ENCODE measurements at regions of chr10 and their contacts with region 1.

Region 1: DNA sequence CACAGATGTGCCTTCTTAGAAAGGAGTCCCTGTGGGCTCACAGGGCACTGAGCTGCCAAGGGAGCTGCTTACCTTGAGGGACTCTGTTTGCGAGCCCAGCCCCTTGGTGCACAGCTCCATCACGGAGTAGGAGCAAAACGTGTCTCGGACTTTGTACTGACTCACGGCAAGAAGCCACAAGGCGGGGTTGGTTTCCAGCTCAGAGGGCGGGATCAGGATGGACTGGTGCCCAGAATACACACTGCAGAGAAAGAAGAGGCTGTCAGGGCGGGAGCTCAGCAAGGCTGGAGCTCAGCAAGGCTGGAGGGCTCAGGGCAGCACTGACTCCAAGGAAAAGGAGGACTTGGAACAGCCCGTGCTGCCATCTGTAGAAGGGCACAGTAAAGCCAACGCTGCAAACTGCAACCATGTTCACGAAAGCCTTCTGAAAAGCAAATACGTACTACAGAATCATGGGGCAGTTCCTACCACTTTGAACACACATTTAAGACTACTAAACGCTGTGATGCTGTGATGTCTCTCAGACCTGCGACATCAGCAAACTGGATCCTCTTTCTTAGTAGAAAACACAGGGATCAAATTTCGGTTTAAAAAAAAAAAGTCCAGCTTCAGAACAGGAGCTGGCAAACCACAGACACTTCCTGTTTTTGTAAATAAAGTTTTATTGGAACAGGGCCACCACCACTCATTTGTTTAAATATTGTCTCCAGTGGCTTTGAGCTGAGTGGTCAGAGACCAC is 194.3 kb downstream of the ZMYND11 start:
- DNase-seq: peak; percentile 60
- H3K4me3 Mint-ChIP-seq: peak overlapping the region; percentile 41
- H3K27ac Mint-ChIP-seq: peak overlapping the region; percentile 26
- H3K4me1 Mint-ChIP-seq: peaks cover 17% of the 10 kb centered on the region
- H3K27me3 Mint-ChIP-seq: no peaks in the 10 kb centered on the region

Region 2: DNA sequence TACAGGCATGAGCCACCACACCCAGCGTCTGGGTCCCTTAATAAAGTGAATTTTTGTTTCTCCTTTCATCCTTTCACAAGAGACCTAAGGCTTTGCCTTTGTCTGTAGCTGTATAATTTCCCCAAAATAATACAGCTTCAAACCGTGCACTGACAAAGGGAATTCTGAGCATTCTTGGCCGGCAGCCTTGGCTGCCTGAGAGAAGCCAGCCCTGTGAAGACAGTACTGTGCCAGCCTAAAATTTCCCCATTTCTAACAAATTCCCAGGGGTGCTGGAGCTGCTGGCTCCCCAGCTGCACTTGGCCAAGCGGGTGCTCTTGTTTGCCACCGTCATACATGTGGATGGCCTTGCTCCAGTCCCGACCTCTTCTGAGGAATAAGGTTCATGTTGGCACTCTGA is 88.1 kb before region 1 on chr10:
- intact Hi-C with region 1: no loop called
- DNase-seq: no peak
- H3K4me3 Mint-ChIP-seq: no peak overlapping the region
- H3K27ac Mint-ChIP-seq: no peak overlapping the region
- H3K4me1 Mint-ChIP-seq: no peaks in the 10 kb centered on the region
- H3K27me3 Mint-ChIP-seq: no peaks in the 10 kb centered on the region

Region 3: GRCh38 chr10:283916-284356 is 45.6 kb before region 1 on chr10:
- intact Hi-C with region 1: loop called (anchors 5 kb)
- DNase-seq: peak; percentile 74
- H3K4me3 Mint-ChIP-seq: peak overlapping the region; percentile 47
- H3K27ac Mint-ChIP-seq: peak overlapping the region; percentile 73
- H3K4me1 Mint-ChIP-seq: peaks cover 17% of the 10 kb centered on the region
- H3K27me3 Mint-ChIP-seq: no peaks in the 10 kb centered on the region

Region 4: DNA sequence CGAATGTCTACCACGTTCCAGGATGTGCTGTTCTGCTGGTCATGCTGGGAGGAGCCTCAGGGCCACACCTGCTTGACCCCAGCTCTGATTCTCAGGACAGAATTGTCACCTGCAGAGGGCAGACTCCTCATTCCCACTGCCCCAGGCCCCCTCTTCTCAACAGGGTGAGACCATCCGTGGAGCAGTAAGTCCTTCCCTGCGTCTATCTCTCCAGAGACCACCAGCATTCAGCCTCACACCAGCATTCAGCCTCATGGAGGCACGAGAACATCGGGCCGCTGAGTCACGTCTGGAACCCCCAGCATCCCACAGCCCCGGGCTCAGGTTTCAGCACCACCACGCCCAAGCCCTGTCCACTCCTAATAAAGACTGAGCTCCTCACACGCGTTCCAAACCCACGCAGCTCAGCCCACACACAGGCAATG is 86.6 kb after region 1 on chr10:
- intact Hi-C with region 1: no loop called
- DNase-seq: no peak
- H3K4me3 Mint-ChIP-seq: no peak overlapping the region
- H3K27ac Mint-ChIP-seq: no peak overlapping the region
- H3K4me1 Mint-ChIP-seq: no peaks in the 10 kb centered on the region
- H3K27me3 Mint-ChIP-seq: no peaks in the 10 kb centered on the region